ENCODE measurements at regions of chr1 and their contacts with region 1.

Region 1: DNA sequence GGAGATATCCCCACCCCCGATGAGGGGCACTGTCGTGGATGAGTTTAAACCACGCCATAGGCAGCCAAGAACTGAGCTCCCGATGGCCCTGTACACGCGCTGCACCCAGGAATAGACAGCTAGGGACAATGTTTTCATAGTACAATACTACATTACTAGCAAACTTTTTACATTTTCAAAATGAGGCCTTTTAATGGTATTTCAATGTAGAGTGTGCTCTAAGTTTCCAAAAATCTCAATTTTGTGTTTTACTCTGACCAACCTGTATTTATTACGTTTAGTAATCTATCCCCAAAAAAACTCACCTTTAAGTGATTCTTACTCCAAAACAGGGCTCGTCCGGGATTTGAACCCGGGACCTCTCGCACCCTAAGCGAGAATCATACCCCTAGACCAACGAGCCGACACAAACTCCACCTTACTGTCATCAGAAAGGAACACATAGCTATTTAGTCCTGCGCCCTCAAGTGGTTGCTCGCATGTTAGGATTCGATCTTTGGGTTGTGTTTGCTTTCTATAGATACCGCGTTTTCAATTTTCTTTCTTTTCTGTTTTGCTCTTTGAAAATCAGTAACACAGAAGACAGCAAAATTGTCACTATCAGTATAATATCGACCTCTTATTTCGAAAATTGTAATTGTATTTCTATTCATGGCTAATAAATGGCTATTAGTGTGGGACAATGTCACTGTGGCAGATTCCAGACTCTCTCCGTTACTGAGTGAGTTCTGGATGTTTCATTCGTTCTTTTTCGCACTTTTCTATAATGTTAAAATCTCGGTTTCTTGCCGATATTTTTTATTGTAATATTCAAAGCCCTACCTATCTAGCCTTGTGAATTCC is 6.4 kb upstream of the MPZL1 start:
- DNase-seq: peak; percentile 77
- H3K4me3 ChIP-seq: peak overlapping the region; percentile 95
- H3K27ac ChIP-seq: peak overlapping the region; percentile 90
- H3K27me3 ChIP-seq: no peaks in the 10 kb centered on the region
- CTCF ChIP-seq: peak; percentile 96

Region 2: DNA sequence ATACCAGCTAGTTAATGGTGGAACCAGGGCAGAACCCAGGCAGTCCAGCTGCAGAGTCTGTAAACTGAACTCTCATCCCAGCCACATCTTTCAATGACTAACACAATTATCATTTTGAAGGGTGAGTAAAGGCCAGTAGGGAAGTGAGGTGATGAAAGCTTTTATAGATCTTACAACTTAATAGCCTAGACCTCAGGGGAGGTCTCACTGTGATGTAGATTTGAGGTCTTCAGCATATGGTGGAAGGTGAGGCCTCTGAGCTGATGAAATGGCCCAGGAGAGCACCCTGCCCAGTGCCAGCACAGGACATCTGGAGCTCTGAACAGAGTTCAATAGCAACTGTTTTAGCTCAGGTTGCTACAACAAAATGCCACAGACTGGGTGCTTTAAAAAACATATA is 539.5 kb before region 1 on chr1:
- CTCF ChIA-PET with region 1: no interaction called
- POLR2A ChIA-PET with region 1: no interaction called
- DNase-seq: no peak
- H3K4me3 ChIP-seq: no peak overlapping the region
- H3K27ac ChIP-seq: no peak overlapping the region
- H3K27me3 ChIP-seq: no peaks in the 10 kb centered on the region
- CTCF ChIP-seq: no peak

Region 3: GRCh38 chr1:167739752-167740151 is 24.4 kb after region 1 on chr1:
- CTCF ChIA-PET with region 1: interaction called, 12 read pairs
- POLR2A ChIA-PET with region 1: no interaction called
- DNase-seq: no peak
- H3K4me3 ChIP-seq: no peak overlapping the region
- H3K27ac ChIP-seq: no peak overlapping the region
- H3K27me3 ChIP-seq: no peaks in the 10 kb centered on the region
- CTCF ChIP-seq: no peak

Region 4: GRCh38 chr1:167803358-167804207 is 88.2 kb after region 1 on chr1:
- CTCF ChIA-PET with region 1: interaction called, 10 read pairs
- POLR2A ChIA-PET with region 1: interaction called, 13 read pairs
- DNase-seq: peak; percentile 89
- H3K4me3 ChIP-seq: no peak overlapping the region
- H3K27ac ChIP-seq: no peak overlapping the region
- H3K27me3 ChIP-seq: no peaks in the 10 kb centered on the region
- CTCF ChIP-seq: peak; percentile 96

Measured in AG04450 (cell line).